ENCODE measurements at regions of chr17 and their contacts with region 1.

Region 1: DNA sequence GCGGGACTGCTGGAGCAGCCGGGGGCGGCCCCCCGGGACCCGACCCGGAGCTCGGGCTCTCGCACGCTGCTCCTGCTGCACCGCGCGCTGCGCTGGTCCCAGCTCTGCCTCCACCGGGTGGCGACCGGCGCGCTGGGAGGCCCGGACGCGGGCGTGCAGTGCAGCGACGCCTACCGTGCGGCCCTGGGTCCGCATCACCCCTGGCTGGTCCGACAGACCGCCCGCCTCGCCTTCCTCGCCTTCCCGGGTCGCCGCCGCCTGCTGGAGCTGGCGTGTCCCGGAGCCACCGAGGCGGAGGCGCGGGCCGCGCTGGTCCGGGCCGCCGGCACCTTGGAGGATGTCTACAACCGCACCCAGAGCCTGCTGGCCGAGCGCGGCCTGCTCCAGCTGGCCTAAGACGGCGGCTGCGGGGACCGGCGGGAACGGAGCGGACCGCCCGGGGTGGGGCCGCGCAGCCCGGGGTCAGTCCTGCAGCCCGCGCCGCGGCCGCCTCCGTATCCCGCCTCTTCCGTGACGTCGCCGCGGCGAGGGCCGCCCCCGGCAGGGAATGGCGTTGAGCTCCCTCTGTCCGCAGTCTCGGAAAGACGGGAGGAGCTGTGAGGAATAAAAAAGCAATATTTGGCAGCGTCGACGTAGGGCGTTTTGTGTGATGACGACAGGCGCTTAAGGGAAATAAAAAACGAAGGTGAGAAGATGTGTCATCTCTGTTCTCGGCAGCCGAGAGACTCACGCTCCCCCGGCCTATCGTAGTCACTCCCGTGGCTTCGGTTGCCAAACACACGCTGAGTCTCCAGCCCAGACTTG is 1.3 kb downstream of the GLTPD2 start:
- DNase-seq: peak; percentile 96
- H3K4me3 ChIP-seq: peak overlapping the region; percentile 63 to 80 (median 71)
- H3K27ac ChIP-seq: peak overlapping the region; percentile 69
- H3K4me1 ChIP-seq: peaks cover 26% of the 10 kb centered on the region
- H3K27me3 ChIP-seq: no peaks in the 10 kb centered on the region
- CTCF ChIP-seq: peak; percentile 45 to 72

Region 2: DNA sequence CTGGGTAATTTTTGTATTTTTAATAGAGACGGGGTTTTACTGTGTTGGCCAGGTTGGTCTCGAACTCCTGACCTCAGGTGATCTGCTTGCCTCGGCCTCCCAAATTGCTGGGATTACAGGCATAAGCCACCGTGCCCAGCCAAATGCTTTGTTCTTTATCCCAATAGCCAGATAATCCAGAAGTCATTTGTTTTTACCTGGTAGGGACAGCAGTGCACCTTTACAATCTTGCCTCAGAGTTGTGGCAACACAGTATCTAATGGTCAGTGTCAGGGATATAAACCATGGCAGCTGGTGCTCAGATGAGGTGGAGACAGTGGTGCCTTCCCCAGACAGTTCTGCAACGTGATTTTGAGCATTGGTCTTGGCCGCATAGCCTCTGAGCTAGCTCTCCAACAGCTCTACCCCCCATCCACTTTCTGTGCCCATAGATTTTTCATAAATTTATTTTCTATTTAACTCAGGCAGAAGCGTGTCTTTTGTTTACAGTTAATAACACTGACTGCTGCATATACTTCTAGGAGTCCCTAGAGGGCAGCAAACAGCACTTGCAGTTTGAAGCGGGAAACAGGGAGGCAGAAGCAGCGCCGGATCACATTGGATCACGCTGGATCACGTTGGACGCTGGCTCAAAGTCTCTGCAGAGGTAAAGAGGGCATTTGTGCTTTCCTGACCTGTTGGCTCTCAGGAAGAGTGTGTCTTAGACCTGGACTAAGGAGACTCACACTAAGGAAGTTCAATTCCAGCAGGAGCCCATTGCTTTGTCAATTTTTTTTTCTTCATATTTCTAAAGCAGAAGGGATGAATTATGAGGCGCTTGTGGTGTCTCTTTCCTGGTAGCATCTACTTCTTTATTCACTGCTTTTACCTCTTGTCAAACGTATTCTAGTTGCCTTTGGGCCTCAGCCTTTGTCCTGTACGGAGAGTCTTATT is 224.6 kb before region 1 on chr17:
- CTCF ChIA-PET with region 1: interaction called, 4 read pairs
- dilution Hi-C with region 1: no loop called
- in situ Hi-C with region 1: no loop called
- intact Hi-C with region 1: loop called (anchors 10 kb)
- DNase-seq: peak; percentile 61
- H3K4me3 ChIP-seq: no peak overlapping the region
- H3K27ac ChIP-seq: no peak overlapping the region
- H3K4me1 ChIP-seq: peaks cover 17% of the 10 kb centered on the region
- H3K27me3 ChIP-seq: no peaks in the 10 kb centered on the region
- CTCF ChIP-seq: peak; percentile 90 to 92

Region 3: GRCh38 chr17:4721203-4722135 is 68.6 kb before region 1 on chr17:
- CTCF ChIA-PET with region 1: interaction called, 16 read pairs
- dilution Hi-C with region 1: no loop called
- in situ Hi-C with region 1: no loop called
- intact Hi-C with region 1: no loop called
- DNase-seq: no peak
- H3K4me3 ChIP-seq: no peak overlapping the region
- H3K27ac ChIP-seq: no peak overlapping the region
- H3K4me1 ChIP-seq: peaks cover 4% of the 10 kb centered on the region
- H3K27me3 ChIP-seq: no peaks in the 10 kb centered on the region
- CTCF ChIP-seq: no peak

Region 4: GRCh38 chr17:4833178-4833940 is 43.3 kb after region 1 on chr17 and contains the start of gene MINK1:
- CTCF ChIA-PET with region 1: no interaction called
- dilution Hi-C with region 1: no loop called
- in situ Hi-C with region 1: no loop called
- intact Hi-C with region 1: loop called (anchors 1 kb)
- DNase-seq: peak; percentile 95
- H3K4me3 ChIP-seq: peak within 1 kb of the TSS; percentile 69 to 91 (median 75)
- H3K27ac ChIP-seq: peak within 1 kb of the TSS; percentile 95
- H3K4me1 ChIP-seq: peaks cover 18% of the 10 kb centered on the region
- H3K27me3 ChIP-seq: no peaks in the 10 kb centered on the region
- CTCF ChIP-seq: no peak
- total RNA-seq, gene MINK1: 71.0 to 201 TPM

Region 5: GRCh38 chr17:4881761-4882555 is 91.9 kb after region 1 on chr17:
- CTCF ChIA-PET with region 1: no interaction called
- dilution Hi-C with region 1: no loop called
- in situ Hi-C with region 1: loop called in 1 of 2 experiments (anchors 10 kb)
- intact Hi-C with region 1: loop called (anchors 1 kb)
- DNase-seq: peak; percentile 63
- H3K4me3 ChIP-seq: no peak overlapping the region
- H3K27ac ChIP-seq: no peak overlapping the region
- H3K4me1 ChIP-seq: peaks cover 5% of the 10 kb centered on the region
- H3K27me3 ChIP-seq: no peaks in the 10 kb centered on the region
- CTCF ChIP-seq: peak; percentile 88 to 91

Region 6: GRCh38 chr17:4903051-4903818 is 113.1 kb after region 1 on chr17 and contains the start of gene CHRNE:
- CTCF ChIA-PET with region 1: interaction called, 3 read pairs
- dilution Hi-C with region 1: no loop called
- in situ Hi-C with region 1: no loop called
- intact Hi-C with region 1: loop called (anchors 1 kb)
- DNase-seq: peak; percentile 73
- H3K4me3 ChIP-seq: no peak within 1 kb of the TSS
- H3K27ac ChIP-seq: no peak within 1 kb of the TSS
- H3K4me1 ChIP-seq: peaks cover 15% of the 10 kb centered on the region
- H3K27me3 ChIP-seq: no peaks in the 10 kb centered on the region
- CTCF ChIP-seq: peak; percentile 80 to 81
- total RNA-seq, gene CHRNE: under 0.01 TPM in 1 of 2 donors, not detected in the other